Mammary epithelial cell (primary cell): ENCODE measurements at regions of chr11 and their contacts with region 1.

Region 1: GRCh38 chr11:18171377-18172000 is 1.1 kb upstream of the MRGPRX4 start:
- DNase-seq: peak; percentile 35
- H3K4me3 ChIP-seq: no peak overlapping the region
- H3K27ac ChIP-seq: no peak overlapping the region
- H3K4me1 ChIP-seq: peaks cover 8% of the 10 kb centered on the region
- H3K27me3 ChIP-seq: no peaks in the 10 kb centered on the region
- CTCF ChIP-seq: peak; percentile 53 to 78

Region 2: GRCh38 chr11:17939542-17939941 is 231.9 kb before region 1 on chr11:
- CTCF ChIA-PET with region 1: no interaction called
- dilution Hi-C with region 1: no loop called
- in situ Hi-C with region 1: no loop called
- intact Hi-C with region 1: no loop called
- DNase-seq: no peak
- H3K4me3 ChIP-seq: no peak overlapping the region
- H3K27ac ChIP-seq: no peak overlapping the region
- H3K4me1 ChIP-seq: no peaks in the 10 kb centered on the region
- H3K27me3 ChIP-seq: no peaks in the 10 kb centered on the region
- CTCF ChIP-seq: no peak

Region 3: DNA sequence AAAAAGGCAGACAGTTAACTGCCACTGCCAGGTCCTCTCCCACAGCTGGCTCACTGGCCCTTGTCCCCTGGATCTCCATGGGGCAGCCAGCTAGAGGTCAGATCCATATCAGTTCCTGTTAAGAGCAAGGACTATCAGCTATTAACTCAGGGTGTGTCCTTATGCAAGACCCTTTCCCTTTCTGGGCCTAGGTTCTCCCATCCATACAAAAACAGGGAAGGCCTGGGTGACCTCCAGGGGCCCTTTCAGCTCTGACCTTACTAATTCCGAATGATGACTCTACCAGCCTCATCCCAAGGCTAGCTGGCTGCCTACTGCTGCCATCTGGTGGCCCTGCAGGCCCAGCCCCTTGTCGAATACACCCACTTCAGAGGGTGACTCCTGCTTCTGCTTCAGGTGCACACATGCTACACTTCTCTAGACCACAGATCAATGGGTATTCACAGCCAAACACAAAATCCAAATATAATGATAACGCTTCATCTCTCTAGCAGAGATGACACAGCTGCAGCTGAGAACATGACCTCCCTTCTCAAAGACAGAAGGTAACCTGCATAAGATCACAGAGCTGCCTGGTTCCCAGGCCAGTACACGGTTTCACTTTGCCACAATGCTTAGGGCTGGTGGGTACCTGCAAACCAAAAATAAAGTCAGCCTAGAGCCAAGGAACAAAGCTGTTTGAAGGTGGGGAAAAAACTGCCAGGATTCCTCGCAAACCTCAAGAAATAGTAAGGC is 192.8 kb before region 1 on chr11:
- CTCF ChIA-PET with region 1: no interaction called
- dilution Hi-C with region 1: no loop called
- in situ Hi-C with region 1: no loop called
- intact Hi-C with region 1: no loop called
- DNase-seq: peak; percentile 39
- H3K4me3 ChIP-seq: no peak overlapping the region
- H3K27ac ChIP-seq: no peak overlapping the region
- H3K4me1 ChIP-seq: no peaks in the 10 kb centered on the region
- H3K27me3 ChIP-seq: no peaks in the 10 kb centered on the region
- CTCF ChIP-seq: peak; percentile 82 to 89

Region 4: GRCh38 chr11:18191376-18191775 is 19.9 kb after region 1 on chr11:
- CTCF ChIA-PET with region 1: no interaction called
- dilution Hi-C with region 1: no loop called
- in situ Hi-C with region 1: no loop called
- intact Hi-C with region 1: no loop called
- DNase-seq: no peak
- H3K4me3 ChIP-seq: no peak overlapping the region
- H3K27ac ChIP-seq: no peak overlapping the region
- H3K4me1 ChIP-seq: no peaks in the 10 kb centered on the region
- H3K27me3 ChIP-seq: no peaks in the 10 kb centered on the region
- CTCF ChIP-seq: no peak

Region 5: DNA sequence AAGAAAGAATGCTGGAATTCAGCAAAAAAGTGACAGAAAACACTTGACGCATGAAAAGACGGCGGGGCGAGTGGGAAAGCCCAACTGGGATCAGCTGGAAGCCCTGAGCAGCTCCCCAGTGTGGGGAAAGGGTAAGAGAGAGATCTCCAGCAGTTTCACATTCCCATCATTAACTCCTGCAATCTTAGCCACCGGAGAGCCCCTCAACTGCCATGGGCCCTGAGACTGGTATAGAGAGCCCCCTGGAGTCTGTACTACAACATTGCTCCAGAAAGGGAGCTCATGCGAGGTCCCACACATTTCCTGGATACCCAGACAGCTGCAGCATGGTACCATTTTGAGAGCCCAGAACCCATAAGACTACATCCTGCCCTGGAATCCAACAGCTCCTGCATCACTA is 32.2 kb after region 1 on chr11:
- CTCF ChIA-PET with region 1: no interaction called
- dilution Hi-C with region 1: no loop called
- in situ Hi-C with region 1: no loop called
- intact Hi-C with region 1: loop called (anchors 2 kb)
- DNase-seq: no peak
- H3K4me3 ChIP-seq: no peak overlapping the region
- H3K27ac ChIP-seq: no peak overlapping the region
- H3K4me1 ChIP-seq: no peaks in the 10 kb centered on the region
- H3K27me3 ChIP-seq: no peaks in the 10 kb centered on the region
- CTCF ChIP-seq: peak; percentile 34 to 37

Region 6: DNA sequence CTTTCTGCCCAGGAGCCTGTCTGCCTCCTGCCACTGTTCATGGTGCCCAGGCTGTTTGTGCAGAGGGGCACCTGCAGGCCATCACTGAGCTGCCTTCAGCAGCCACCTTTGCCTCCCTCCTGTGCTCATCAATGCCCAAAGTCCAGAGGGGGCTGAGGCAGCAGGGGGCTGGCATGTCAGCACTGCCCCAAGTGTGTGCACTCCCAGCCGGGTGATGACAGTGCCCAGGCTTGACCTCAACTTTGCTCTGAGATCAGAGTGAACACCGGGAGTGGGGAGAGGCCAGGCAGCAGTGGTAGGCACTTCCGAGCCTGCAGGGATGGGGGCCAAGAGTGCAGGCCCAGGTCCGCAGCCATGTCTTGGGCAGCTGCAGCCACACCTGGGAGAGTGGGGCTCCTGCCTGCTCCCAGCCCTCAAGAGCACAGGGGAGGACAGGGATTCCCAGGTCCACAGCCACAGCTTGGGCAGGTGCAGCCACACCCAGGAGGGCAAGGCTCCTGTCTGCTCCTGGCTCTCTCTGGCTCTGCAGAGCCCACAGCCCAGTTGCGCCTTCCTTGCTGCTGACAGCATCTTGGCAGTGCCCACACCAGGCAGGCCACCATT is 49.9 kb after region 1 on chr11:
- CTCF ChIA-PET with region 1: no interaction called
- dilution Hi-C with region 1: loop called (anchors 5 kb)
- in situ Hi-C with region 1: no loop called
- intact Hi-C with region 1: no loop called
- DNase-seq: no peak
- H3K4me3 ChIP-seq: no peak overlapping the region
- H3K27ac ChIP-seq: no peak overlapping the region
- H3K4me1 ChIP-seq: no peaks in the 10 kb centered on the region
- H3K27me3 ChIP-seq: peaks cover 5% of the 10 kb centered on the region
- CTCF ChIP-seq: no peak

Region 7: GRCh38 chr11:18310800-18311340 is 139.4 kb after region 1 on chr11:
- CTCF ChIA-PET with region 1: no interaction called
- dilution Hi-C with region 1: no loop called
- in situ Hi-C with region 1: no loop called
- intact Hi-C with region 1: no loop called
- DNase-seq: peak; percentile 95
- H3K4me3 ChIP-seq: no peak overlapping the region
- H3K27ac ChIP-seq: peak overlapping the region; percentile 94
- H3K4me1 ChIP-seq: peaks cover 50% of the 10 kb centered on the region
- H3K27me3 ChIP-seq: no peaks in the 10 kb centered on the region
- CTCF ChIP-seq: no peak